Activated CD4-positive, alpha-beta T cell treated with anti-CD3 and anti-CD28 coated beads for 36 hours (primary cell): ENCODE measurements at regions of chr17 and their contacts with region 1.

Region 1: DNA sequence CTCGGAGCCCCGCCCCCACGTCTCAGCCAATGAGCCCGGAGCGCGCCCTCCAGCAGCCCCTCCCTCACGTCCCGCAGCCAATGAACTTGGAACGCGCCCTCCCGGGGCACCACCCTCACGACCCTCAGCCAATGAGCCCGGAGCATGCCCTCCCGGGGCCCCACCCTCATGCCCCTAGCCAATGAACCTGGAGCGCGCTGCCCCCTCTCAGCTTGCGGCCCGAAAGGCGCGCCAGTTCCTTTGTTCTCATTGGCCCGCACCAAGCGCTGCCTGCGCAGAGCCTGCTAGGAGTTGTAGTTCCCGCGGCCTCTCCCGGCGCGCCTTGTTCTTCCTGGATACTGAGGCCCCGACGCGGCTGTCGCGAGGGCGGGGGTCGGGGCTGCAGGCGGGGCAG is at the start of gene LRRC45:
- DNase-seq: peak; percentile 100
- ATAC-seq: peak; percentile 97
- H3K4me3 Mint-ChIP-seq: peak within 1 kb of the TSS; percentile 84
- H3K27ac Mint-ChIP-seq: peak within 1 kb of the TSS; percentile 76
- H3K4me1 Mint-ChIP-seq: peaks cover 14% of the 10 kb centered on the region
- H3K27me3 Mint-ChIP-seq: no peaks in the 10 kb centered on the region
- total RNA-seq, gene LRRC45: 17.6 to 20.6 TPM

Region 2: GRCh38 chr17:81711814-81712467 is 311.0 kb before region 1 on chr17 and contains the start of gene SLC25A10:
- CTCF ChIA-PET with region 1: no interaction called
- POLR2A ChIA-PET with region 1: no interaction called
- intact Hi-C with region 1: loop called in 1 of 2 experiments (anchors 2 kb)
- DNase-seq: peak; percentile 93
- ATAC-seq: peak; percentile 87
- H3K4me3 Mint-ChIP-seq: peak within 1 kb of the TSS; percentile 89
- H3K27ac Mint-ChIP-seq: peak within 1 kb of the TSS; percentile 84
- H3K4me1 Mint-ChIP-seq: peaks cover 24% of the 10 kb centered on the region
- H3K27me3 Mint-ChIP-seq: no peaks in the 10 kb centered on the region
- total RNA-seq, gene SLC25A10: 28.6 to 31.8 TPM

Region 3: DNA sequence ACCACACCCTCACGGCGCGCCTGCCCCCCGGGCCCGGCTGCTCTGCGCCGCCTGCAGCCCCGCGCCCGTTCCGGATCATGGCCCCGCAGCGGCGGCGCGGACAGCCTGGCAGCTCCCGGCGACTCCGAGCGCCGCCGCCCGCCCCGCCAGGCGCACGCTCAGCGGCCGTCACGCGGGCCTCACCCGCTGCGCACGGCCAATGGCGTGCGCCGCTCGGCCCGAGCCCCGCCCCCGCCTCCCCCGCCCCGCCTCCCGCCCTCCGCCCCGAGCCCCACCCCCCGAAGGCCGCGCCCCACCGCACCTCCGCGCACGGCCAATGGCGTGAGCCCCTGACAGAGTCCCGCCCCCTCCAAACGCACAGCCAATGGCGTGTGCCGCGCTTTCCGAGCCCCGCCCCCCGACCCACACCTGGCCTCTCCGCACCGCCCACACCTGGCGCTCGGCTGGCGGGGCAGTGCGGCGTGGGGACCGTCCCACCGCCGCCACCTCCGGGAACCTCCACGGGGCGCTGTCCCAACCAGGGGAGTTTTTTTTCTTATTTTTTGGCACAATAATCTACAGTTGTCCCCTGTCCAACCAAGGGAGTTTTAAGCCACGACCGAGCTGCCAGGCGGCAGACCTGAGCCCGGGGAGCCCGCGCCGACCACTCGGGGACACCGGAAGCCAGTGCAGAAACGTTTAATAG is 111.6 kb before region 1 on chr17 and contains the start of gene PCYT2:
- CTCF ChIA-PET with region 1: interaction called, 4 read pairs
- POLR2A ChIA-PET with region 1: no interaction called
- intact Hi-C with region 1: loop called in 1 of 2 experiments (anchors 1 kb)
- DNase-seq: peak; percentile 97
- ATAC-seq: peak; percentile 96
- H3K4me3 Mint-ChIP-seq: peak within 1 kb of the TSS; percentile 79
- H3K27ac Mint-ChIP-seq: no peak within 1 kb of the TSS
- H3K4me1 Mint-ChIP-seq: peaks cover 14% of the 10 kb centered on the region
- H3K27me3 Mint-ChIP-seq: no peaks in the 10 kb centered on the region
- total RNA-seq, gene PCYT2: 19.7 to 24.0 TPM

Region 4: GRCh38 chr17:81959362-81960129 is 63.4 kb before region 1 on chr17:
- CTCF ChIA-PET with region 1: interaction called, 54 read pairs
- POLR2A ChIA-PET with region 1: interaction called, 8 read pairs
- intact Hi-C with region 1: loop called (anchors 1 kb)
- DNase-seq: peak; percentile 86
- ATAC-seq: peak; percentile 90
- H3K4me3 Mint-ChIP-seq: peak overlapping the region; percentile 38
- H3K27ac Mint-ChIP-seq: no peak overlapping the region
- H3K4me1 Mint-ChIP-seq: no peaks in the 10 kb centered on the region
- H3K27me3 Mint-ChIP-seq: peaks cover 11% of the 10 kb centered on the region

Region 5: GRCh38 chr17:82037113-82037888 is 14.3 kb after region 1 on chr17 and contains the start of gene DCXR:
- CTCF ChIA-PET with region 1: interaction called, 16 read pairs
- POLR2A ChIA-PET with region 1: interaction called, 9 read pairs
- intact Hi-C with region 1: loop called (anchors 1 to 2 kb)
- DNase-seq: peak; percentile 97
- ATAC-seq: peak; percentile 97
- H3K4me3 Mint-ChIP-seq: peak within 1 kb of the TSS; percentile 82
- H3K27ac Mint-ChIP-seq: peak within 1 kb of the TSS; percentile 80
- H3K4me1 Mint-ChIP-seq: peaks cover 23% of the 10 kb centered on the region
- H3K27me3 Mint-ChIP-seq: no peaks in the 10 kb centered on the region
- total RNA-seq, gene DCXR: 105 to 166 TPM

Region 6: DNA sequence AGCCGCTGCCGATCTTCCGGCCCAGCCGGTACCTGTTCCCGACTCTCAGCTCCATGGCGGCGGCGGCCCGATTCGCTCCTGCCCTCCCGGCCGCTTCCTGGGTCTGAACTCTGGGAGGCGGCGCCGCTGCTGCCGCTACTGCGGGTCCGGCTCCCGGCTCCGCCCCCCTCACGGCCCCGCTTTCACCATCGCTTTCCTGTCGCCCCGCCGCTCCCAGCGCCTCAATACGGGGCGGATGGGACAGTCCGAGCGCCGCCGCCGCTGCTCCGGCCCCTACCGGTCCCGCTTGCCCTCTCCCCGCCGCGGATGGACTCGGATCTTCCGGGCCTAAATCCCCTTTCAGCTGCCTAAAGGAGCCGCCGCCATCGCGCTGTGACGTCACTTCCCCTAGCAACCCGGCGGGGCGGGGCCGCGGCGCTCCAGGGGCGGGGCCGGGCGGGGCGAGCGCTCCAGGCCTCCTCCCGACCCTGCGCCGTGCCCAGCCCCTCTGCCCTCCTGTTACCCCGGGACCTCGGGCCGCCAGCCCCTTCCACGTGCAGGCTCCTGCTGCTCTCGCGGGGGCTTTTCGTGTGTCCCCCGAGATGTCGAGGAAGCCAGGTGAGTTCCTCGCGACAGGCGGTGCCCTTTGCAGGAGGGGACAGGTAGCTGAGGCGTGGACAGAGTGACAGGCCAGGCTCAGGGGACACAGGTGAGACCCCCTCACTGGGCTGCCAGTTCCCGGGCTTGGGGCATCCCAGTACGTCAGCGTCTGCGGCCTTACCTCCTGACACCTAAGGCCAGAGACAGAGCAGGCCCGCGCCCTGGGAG is 250.6 kb after region 1 on chr17 and contains the start of gene CSNK1D:
- CTCF ChIA-PET with region 1: no interaction called
- POLR2A ChIA-PET with region 1: no interaction called
- intact Hi-C with region 1: loop called in 1 of 2 experiments (anchors 2 kb)
- DNase-seq: peak; percentile 96
- ATAC-seq: peak; percentile 81
- H3K4me3 Mint-ChIP-seq: peak within 1 kb of the TSS; percentile 90
- H3K27ac Mint-ChIP-seq: peak within 1 kb of the TSS; percentile 94
- H3K4me1 Mint-ChIP-seq: peaks cover 39% of the 10 kb centered on the region
- H3K27me3 Mint-ChIP-seq: no peaks in the 10 kb centered on the region
- total RNA-seq, gene CSNK1D: 118 to 182 TPM

Region 7: DNA sequence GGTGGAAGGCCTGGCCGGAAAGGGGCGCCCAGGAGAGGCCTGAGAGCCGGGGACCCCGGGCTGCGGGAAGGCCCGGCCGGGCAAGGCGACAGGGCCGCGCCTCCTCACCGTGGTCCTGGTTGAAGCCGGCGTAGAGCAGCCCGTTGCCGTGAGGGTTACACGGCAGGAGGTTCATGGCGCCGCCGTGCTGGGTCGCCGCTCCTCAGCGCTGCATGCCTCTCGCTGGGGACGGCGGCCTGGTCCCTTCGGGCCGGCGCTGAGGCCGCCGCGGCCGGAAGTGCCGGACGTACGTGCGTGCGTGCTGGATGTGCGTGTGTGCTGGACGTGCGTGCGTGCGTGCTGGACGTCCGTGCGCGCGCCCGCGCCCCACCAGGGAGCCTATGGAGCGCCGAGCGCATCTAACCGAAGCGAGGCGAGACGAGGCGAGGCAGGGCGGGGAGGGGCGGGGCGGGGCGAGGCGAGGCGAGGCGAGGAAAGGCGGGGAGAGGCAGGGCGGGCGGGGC is 625.2 kb after region 1 on chr17 and contains the start of gene WDR45B:
- CTCF ChIA-PET with region 1: no interaction called
- POLR2A ChIA-PET with region 1: no interaction called
- intact Hi-C with region 1: loop called in 1 of 2 experiments (anchors 2 kb)
- DNase-seq: peak; percentile 95
- ATAC-seq: peak; percentile 88
- H3K4me3 Mint-ChIP-seq: peak within 1 kb of the TSS; percentile 82
- H3K27ac Mint-ChIP-seq: peak within 1 kb of the TSS; percentile 65
- H3K4me1 Mint-ChIP-seq: peaks cover 24% of the 10 kb centered on the region
- H3K27me3 Mint-ChIP-seq: no peaks in the 10 kb centered on the region
- total RNA-seq, gene WDR45B: 74.1 to 74.8 TPM